ENCODE measurements at regions of chr18 and their contacts with region 1.

Region 1: DNA sequence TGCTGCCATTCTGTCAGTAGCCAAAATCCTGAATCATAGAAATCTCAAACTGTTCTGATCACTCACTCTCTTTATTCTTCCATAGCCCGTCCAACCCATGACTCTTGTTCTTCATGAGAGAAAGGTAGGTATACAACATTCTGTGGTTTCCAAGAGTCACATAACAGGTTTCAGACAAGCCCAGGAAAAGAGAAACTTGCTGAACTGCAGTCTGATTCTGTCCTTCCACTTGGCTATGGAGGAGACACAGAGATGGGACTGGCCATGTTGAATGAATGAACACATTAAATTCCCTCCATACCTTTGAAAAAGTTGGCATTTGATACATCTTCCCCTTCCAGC is 880.2 kb upstream of the CELF4 start:
- DNase-seq: no peak

Region 2: DNA sequence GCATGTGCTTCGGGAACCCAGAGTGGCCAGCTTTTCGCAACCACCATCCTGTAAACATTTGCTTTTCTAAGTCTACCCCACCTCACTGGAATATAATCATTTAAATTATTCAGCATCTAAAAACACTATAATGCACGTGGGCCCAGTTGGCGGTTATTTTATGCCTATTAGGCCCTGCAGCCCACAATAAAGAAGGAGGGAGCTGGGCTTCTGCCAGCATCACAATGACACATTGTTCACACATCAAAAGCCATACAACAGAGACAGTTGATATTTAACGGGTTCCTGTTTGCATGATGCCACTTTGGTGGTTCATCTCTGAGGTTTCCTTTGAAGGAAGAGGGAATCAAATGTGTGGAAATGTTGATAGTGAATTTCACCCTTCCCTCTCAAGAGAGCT is 35.8 kb after region 1 on chr18:
- intact Hi-C with region 1: loop called (anchors 2 kb)
- DNase-seq: peak in 33 of 42 donors; percentile 2 to 72 (median 43)

Measured in head of caudate nucleus (tissue), 42 donors.